SK-N-SH (cell line): ENCODE measurements at regions of chr7 and their contacts with region 1.

Region 1: GRCh38 chr7:36967387-36967786 is 243.1 kb upstream of the AOAH start:
- DNase-seq: peak; percentile 79
- H3K4me3 ChIP-seq: no peak overlapping the region
- H3K27ac ChIP-seq: peak overlapping the region in 1 of 2 experiments; percentile 99; a peak in 2 of 4 replicates
- H3K4me1 ChIP-seq: peaks cover 0 to 30% of the 10 kb centered on the region in 2 experiments; a peak in 2 of 4 replicates
- H3K27me3 ChIP-seq: no peaks in the 10 kb centered on the region
- CTCF ChIP-seq: peak; percentile 96
- EP300 ChIP-seq: peak in 1 of 2 experiments; percentile 25; a peak in 1 of 4 replicates
- RAD21 ChIP-seq: peak; percentile 95

Region 2: GRCh38 chr7:36670585-36671431 is 296.6 kb before region 1 on chr7:
- CTCF ChIA-PET with region 1: interaction called, 12 read pairs
- POLR2A ChIA-PET with region 1: no interaction called
- DNase-seq: peak; percentile 70
- H3K4me3 ChIP-seq: no peak overlapping the region; a peak in 1 of 4 replicates
- H3K27ac ChIP-seq: no peak overlapping the region
- H3K4me1 ChIP-seq: no peaks in the 10 kb centered on the region; a peak in 1 of 4 replicates
- H3K27me3 ChIP-seq: no peaks in the 10 kb centered on the region; the same call in 1 of the 2 replicates
- CTCF ChIP-seq: peak; percentile 99
- EP300 ChIP-seq: no peak
- RAD21 ChIP-seq: peak; percentile 86

Region 3: GRCh38 chr7:36736899-36737211 is 230.5 kb before region 1 on chr7:
- CTCF ChIA-PET with region 1: no interaction called
- POLR2A ChIA-PET with region 1: no interaction called
- DNase-seq: no peak
- H3K4me3 ChIP-seq: no peak overlapping the region
- H3K27ac ChIP-seq: no peak overlapping the region
- H3K4me1 ChIP-seq: no peaks in the 10 kb centered on the region; a peak in 1 of 4 replicates
- H3K27me3 ChIP-seq: no peaks in the 10 kb centered on the region
- CTCF ChIP-seq: no peak
- EP300 ChIP-seq: no peak
- RAD21 ChIP-seq: no peak

Region 4: DNA sequence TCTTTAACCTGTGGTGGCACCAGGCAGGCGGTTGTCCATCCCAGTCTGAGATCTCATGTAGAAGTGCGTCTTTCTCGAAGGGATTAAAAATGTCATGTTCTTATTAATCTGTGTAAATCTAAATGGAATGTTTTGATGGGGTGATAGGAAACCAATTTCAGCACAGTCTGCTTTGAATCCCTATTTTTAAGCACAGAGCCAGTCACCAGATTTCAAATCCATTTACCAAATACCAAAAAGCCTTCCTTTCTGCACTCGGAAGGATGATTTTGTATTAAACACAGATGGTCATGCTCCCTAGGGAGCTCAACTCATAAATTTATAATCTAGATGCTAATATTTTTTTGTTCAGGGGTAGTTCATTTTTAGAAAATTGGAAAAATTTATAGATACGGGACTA is 82.5 kb before region 1 on chr7:
- CTCF ChIA-PET with region 1: interaction called, 32 read pairs
- POLR2A ChIA-PET with region 1: no interaction called
- DNase-seq: no peak
- H3K4me3 ChIP-seq: no peak overlapping the region
- H3K27ac ChIP-seq: peak overlapping the region in 1 of 2 experiments; percentile 91; a peak in 2 of 4 replicates
- H3K4me1 ChIP-seq: peaks cover 0 to 40% of the 10 kb centered on the region in 2 experiments; a peak in 2 of 4 replicates
- H3K27me3 ChIP-seq: no peaks in the 10 kb centered on the region
- CTCF ChIP-seq: no peak
- EP300 ChIP-seq: peak in 1 of 2 experiments; percentile 42; a peak in 1 of 4 replicates
- RAD21 ChIP-seq: no peak; the same call in 1 of the 2 replicates

Region 5: DNA sequence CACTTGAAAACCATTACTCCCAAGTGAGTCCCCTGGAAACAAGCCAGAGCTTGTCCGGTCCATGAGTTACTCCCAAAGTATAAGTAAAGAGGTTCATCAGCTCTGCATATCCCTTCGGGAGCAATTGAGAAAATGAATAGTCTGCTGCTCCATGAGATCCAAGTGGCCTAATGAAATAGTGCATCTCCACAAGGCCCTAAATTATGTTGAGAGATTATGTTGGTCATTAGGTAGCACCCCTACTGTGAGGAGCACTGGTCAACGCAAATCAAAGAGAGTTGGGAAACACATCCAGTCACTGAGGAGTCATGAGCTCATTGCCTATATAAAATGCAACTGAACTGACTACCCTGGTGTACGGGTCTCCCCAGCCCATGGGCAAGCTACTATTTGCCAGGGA is 37.6 kb before region 1 on chr7:
- CTCF ChIA-PET with region 1: interaction called, 16 read pairs
- POLR2A ChIA-PET with region 1: interaction called, 3 read pairs
- DNase-seq: no peak
- H3K4me3 ChIP-seq: no peak overlapping the region
- H3K27ac ChIP-seq: no peak overlapping the region; a peak in 1 of 4 replicates
- H3K4me1 ChIP-seq: peaks cover 0 to 38% of the 10 kb centered on the region in 2 experiments; a peak in 2 of 4 replicates
- H3K27me3 ChIP-seq: no peaks in the 10 kb centered on the region
- CTCF ChIP-seq: no peak
- EP300 ChIP-seq: no peak
- RAD21 ChIP-seq: no peak

Region 6: GRCh38 chr7:36999626-37000485 is 32.5 kb after region 1 on chr7:
- CTCF ChIA-PET with region 1: interaction called, 13 read pairs
- POLR2A ChIA-PET with region 1: no interaction called
- DNase-seq: no peak
- H3K4me3 ChIP-seq: no peak overlapping the region
- H3K27ac ChIP-seq: no peak overlapping the region
- H3K4me1 ChIP-seq: no peaks in the 10 kb centered on the region
- H3K27me3 ChIP-seq: no peaks in the 10 kb centered on the region
- CTCF ChIP-seq: no peak
- EP300 ChIP-seq: no peak
- RAD21 ChIP-seq: no peak

Region 7: GRCh38 chr7:37201003-37201875 is 233.9 kb after region 1 on chr7:
- CTCF ChIA-PET with region 1: interaction called, 88 read pairs
- POLR2A ChIA-PET with region 1: no interaction called
- DNase-seq: peak; percentile 83
- H3K4me3 ChIP-seq: no peak overlapping the region
- H3K27ac ChIP-seq: no peak overlapping the region
- H3K4me1 ChIP-seq: peaks cover 0 to 15% of the 10 kb centered on the region in 2 experiments; a peak in 2 of 4 replicates
- H3K27me3 ChIP-seq: no peaks in the 10 kb centered on the region
- CTCF ChIP-seq: peak; percentile 99
- EP300 ChIP-seq: peak in 1 of 2 experiments; percentile 26; a peak in 1 of 4 replicates
- RAD21 ChIP-seq: peak; percentile 91